T-cell (primary cell): ENCODE measurements at regions of chr2 and their contacts with region 1.

Region 1: GRCh38 chr2:55721596-55722215 is 28.1 kb upstream of the PNPT1 start:
- DNase-seq: no peak
- ATAC-seq: no peak
- H3K4me3 ChIP-seq: no peak overlapping the region
- H3K4me3 Mint-ChIP-seq: no peak overlapping the region
- H3K27ac ChIP-seq: no peak overlapping the region
- H3K27ac Mint-ChIP-seq: no peak overlapping the region
- H3K4me1 ChIP-seq: no peaks in the 10 kb centered on the region
- H3K4me1 Mint-ChIP-seq: no peaks in the 10 kb centered on the region
- H3K27me3 ChIP-seq: peaks cover 2 to 8% of the 10 kb centered on the region in 2 experiments
- H3K27me3 Mint-ChIP-seq: peaks cover 0 to 5% of the 10 kb centered on the region in 2 donors

Region 2: DNA sequence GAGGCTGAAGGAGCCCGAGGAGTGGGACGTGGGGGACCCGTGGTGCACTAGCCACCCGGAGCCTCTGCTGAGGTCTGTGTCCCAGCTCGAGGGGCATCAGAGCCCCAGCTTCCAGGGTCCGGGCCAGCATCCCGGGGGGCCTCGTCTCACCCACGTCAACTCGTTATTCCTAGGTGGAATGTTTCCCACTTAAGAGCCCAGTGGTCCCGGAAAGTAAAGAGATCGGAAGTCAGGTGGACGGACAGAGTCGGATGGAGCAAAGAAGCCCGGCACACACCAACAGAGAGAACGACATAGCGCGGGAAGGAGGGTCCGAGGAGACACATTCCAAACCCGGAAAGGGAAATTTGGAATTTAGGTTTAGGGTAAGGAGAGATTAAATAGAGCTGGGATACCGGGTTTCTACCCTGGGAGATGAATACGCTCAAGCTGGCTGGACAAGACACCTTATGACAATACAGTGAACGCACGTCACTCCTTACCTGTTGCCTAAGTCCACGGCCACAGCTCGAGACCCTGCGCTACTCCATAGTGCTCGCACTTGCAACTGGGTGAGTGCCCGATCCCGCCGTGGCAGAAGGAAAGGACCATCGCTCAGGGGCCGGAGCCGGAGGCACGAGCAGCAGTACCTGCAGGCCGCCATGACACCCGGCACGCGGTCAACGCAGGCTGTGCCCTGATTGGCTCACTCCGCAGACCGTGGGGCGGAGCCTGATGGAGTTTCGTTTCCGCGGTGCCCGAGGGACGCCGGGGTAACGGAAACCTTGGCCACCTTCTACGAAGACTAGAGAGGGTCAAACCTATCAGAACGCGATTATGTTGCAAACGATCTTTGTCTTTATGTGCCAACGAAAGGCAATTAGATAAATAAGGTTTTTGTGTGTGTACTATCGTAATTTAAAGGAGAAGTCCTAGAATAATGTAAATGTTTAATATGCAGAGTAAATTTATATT is 28.2 kb before region 1 on chr2 and contains the start of gene PNPT1:
- CTCF ChIA-PET with region 1: interaction called in 1 of 2 experiments, 10 read pairs
- POLR2A ChIA-PET with region 1: no interaction called
- DNase-seq: peak; percentile 79 to 94 (median 88)
- ATAC-seq: peak; percentile 100
- H3K4me3 ChIP-seq: peak within 1 kb of the TSS; percentile 88 to 90
- H3K4me3 Mint-ChIP-seq: peak within 1 kb of the TSS; percentile 96 to 98 (median 98)
- H3K27ac ChIP-seq: peak within 1 kb of the TSS; percentile 56
- H3K27ac Mint-ChIP-seq: peak within 1 kb of the TSS; percentile 82 to 93
- H3K4me1 ChIP-seq: peaks cover 5 to 10% of the 10 kb centered on the region in 2 experiments
- H3K4me1 Mint-ChIP-seq: peaks cover 41 to 46% (median 45%) of the 10 kb centered on the region in 3 donors
- H3K27me3 ChIP-seq: no peaks in the 10 kb centered on the region
- H3K27me3 Mint-ChIP-seq: peaks cover 0 to 1% of the 10 kb centered on the region in 2 donors
- total RNA-seq, gene PNPT1: 13.3 to 31.0 (median 25.7) TPM